ENCODE measurements at regions of chr1 and their contacts with region 1.

Region 1: DNA sequence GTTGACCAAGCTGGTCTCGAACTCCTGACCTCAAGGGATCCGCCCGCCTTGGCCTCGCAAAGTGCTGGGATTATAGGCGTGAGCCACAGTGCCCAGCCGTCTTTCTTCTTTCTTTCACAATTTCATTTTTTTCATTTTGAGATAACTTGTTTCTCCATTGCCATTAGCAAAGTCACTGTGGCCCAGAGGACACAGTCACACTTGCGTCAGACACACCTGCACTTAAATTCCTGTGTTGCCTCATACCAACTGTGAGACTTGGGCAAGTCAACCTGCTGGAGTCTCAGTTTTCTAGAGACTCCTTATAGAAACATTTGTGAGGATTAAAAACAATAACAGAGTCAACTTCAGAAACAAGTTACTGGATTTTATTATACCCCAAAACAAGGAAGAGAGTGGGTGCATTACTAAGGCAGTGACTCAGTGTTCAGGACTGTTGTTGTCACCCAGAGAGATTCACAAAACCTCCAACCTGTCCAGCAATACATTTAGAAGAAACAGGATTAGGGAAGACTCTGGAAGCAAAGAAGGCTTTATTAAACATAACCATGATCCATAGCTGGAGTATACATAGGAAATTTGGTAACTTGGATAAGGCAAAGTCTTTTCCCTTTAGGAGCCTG is 2.6 kb downstream of the TEDDM1 start:
- DNase-seq: no peak
- H3K4me3 Mint-ChIP-seq: no peak overlapping the region
- H3K27ac Mint-ChIP-seq: no peak overlapping the region
- H3K4me1 Mint-ChIP-seq: peaks cover 4% of the 10 kb centered on the region
- H3K27me3 Mint-ChIP-seq: no peaks in the 10 kb centered on the region

Region 2: GRCh38 chr1:182149411-182149965 is 248.4 kb before region 1 on chr1:
- CTCF ChIA-PET with region 1: interaction called, 375 read pairs
- POLR2A ChIA-PET with region 1: interaction called, 3 read pairs
- intact Hi-C with region 1: no loop called
- DNase-seq: peak; percentile 49
- H3K4me3 Mint-ChIP-seq: no peak overlapping the region
- H3K27ac Mint-ChIP-seq: no peak overlapping the region
- H3K4me1 Mint-ChIP-seq: peaks cover 12% of the 10 kb centered on the region
- H3K27me3 Mint-ChIP-seq: no peaks in the 10 kb centered on the region

Region 3: DNA sequence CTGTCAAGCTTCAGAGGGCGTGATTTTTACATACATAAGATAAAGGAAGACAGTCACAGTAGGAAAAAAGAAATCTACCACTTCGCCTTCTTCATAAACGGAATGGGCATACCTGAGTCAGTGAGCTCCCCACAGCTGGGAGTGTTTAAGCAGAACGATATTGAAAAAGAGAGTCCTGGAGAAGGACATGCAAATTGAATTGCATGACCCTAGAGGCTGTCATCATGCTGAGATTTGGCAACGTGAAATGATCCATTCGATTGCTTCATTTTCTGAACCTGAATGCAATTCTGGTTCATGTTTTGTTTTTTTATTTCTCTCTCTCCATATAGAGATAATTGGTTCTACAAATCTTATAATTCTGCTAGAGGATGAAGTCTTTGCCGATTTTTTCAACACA is 55.7 kb after region 1 on chr1:
- CTCF ChIA-PET with region 1: no interaction called
- POLR2A ChIA-PET with region 1: no interaction called
- intact Hi-C with region 1: no loop called
- DNase-seq: no peak
- H3K4me3 Mint-ChIP-seq: no peak overlapping the region
- H3K27ac Mint-ChIP-seq: no peak overlapping the region
- H3K4me1 Mint-ChIP-seq: no peaks in the 10 kb centered on the region
- H3K27me3 Mint-ChIP-seq: peaks cover 8% of the 10 kb centered on the region